MCF 10A (cell line): ENCODE measurements at regions of chr12 and their contacts with region 1.

Region 1: GRCh38 chr12:50111693-50112455 is at the start of gene COX14:
- DNase-seq: peak; percentile 99
- H3K4me3 Mint-ChIP-seq: peak within 1 kb of the TSS; percentile 99
- H3K27ac Mint-ChIP-seq: peak within 1 kb of the TSS; percentile 93
- H3K4me1 Mint-ChIP-seq: peaks cover 12% of the 10 kb centered on the region
- H3K27me3 Mint-ChIP-seq: no peaks in the 10 kb centered on the region
- CTCF ChIP-seq: peak; percentile 80
- total RNA-seq, gene COX14: 43.6 and 45.2 TPM in 2 replicates

Region 2: GRCh38 chr12:50084775-50085614 is 26.9 kb before region 1 on chr12 and contains the start of gene SMARCD1:
- CTCF ChIA-PET with region 1: interaction called, 232 read pairs
- POLR2A ChIA-PET with region 1: interaction called, 70 read pairs
- intact Hi-C with region 1: no loop called
- DNase-seq: peak; percentile 90
- H3K4me3 Mint-ChIP-seq: peak within 1 kb of the TSS; percentile 87
- H3K27ac Mint-ChIP-seq: peak within 1 kb of the TSS; percentile 90
- H3K4me1 Mint-ChIP-seq: peaks cover 33% of the 10 kb centered on the region
- H3K27me3 Mint-ChIP-seq: no peaks in the 10 kb centered on the region
- CTCF ChIP-seq: no peak
- total RNA-seq, gene SMARCD1: 57.4 and 58.7 TPM in 2 replicates

Region 3: DNA sequence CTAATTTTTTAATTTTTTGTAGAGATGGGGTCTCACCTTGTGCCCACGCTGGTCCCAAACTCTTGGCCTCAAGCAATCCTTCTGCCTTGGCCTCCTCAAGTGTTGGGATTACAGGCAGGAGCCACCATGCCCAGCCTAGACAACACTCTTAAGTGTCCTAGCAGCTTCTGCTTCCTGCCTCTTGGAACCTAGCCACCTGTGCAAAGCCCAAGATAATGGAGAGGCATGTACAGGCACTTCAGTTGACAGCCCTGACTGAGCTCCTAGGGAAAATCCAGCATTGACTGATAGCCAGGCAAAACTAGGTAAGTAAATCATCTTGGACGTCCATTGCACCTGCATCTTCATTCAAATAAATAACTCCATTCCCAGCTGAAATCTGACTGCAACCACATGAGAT is 15.7 kb after region 1 on chr12:
- CTCF ChIA-PET with region 1: interaction called, 48 read pairs
- POLR2A ChIA-PET with region 1: interaction called, 24 read pairs
- intact Hi-C with region 1: no loop called
- DNase-seq: no peak
- H3K4me3 Mint-ChIP-seq: no peak overlapping the region
- H3K27ac Mint-ChIP-seq: no peak overlapping the region
- H3K4me1 Mint-ChIP-seq: peaks cover under 1% of the 10 kb centered on the region
- H3K27me3 Mint-ChIP-seq: no peaks in the 10 kb centered on the region
- CTCF ChIP-seq: no peak

Region 4: DNA sequence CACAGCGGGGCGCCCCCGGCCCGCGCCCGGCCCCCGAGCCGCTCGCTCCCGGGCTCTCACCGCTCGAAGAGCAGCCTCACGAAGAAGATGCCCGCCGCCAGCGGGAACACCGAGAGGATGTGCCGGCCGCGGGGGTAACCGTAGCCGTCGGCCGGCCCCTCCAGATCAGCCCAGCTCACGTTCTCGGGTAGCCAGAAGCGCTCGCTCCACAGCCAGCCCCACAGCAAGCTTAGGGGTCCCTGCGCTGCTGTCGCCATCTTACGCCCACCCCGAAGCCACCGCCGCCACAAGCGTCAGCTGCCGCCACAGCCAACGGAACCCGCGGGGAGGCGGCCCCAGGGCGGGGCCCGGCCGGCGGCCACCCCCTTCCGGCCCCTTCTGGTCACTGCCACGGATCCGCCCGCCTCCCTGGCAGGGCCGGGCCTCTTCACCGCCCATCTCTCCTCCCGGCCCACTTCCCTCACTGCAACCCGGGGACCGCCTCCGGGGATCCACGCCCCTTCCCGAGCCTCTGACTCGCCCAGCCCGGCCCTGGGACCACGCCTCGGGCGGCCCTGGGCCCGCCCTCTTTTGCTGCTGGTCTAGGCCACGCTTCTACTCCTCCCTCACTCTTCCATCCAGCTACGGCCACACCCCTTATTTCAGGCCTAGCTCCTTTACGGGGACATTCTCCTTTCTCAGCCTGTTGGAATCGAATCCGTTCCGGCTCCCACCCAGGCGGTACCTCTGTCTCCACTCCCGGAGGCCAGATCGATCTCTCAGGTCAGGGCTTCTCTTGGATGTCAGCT is 55.4 kb after region 1 on chr12 and contains the start of gene CERS5:
- CTCF ChIA-PET with region 1: interaction called, 11 read pairs
- POLR2A ChIA-PET with region 1: interaction called, 56 read pairs
- intact Hi-C with region 1: loop called (anchors 2 kb)
- DNase-seq: peak; percentile 99
- H3K4me3 Mint-ChIP-seq: peak within 1 kb of the TSS; percentile 79
- H3K27ac Mint-ChIP-seq: peak within 1 kb of the TSS; percentile 79
- H3K4me1 Mint-ChIP-seq: peaks cover 12% of the 10 kb centered on the region
- H3K27me3 Mint-ChIP-seq: no peaks in the 10 kb centered on the region
- CTCF ChIP-seq: peak; percentile 9
- total RNA-seq, gene CERS5: 56.8 and 58.1 TPM in 2 replicates

Region 5: DNA sequence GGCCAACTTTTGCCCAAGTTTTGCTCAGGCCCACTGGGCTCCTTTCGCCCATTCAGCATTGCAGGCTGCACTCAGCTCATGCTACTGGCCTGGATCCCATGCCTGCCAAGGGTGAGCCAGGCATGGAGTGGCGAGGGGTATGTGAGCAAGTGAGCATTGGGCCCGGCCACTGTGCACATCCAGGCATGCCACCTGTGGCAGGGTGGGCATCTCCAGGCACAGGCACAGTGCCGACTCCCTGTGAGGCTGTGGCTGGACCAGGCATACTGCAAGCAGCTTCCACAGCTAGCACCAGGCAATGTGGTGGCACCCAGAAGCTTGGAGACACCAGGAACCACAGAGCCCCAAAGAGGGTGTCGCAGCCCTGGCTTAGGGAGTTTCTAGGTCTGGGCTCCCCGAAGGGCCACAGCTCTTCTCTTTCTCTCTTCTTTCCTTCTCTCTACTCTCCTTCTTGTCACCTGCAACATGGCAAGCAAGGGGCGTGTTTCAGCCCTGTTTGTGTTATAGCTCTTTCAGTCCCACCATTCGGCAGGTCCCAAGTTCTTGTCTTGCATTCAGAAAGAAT is 269.0 kb after region 1 on chr12:
- CTCF ChIA-PET with region 1: no interaction called
- POLR2A ChIA-PET with region 1: no interaction called
- intact Hi-C with region 1: no loop called
- DNase-seq: no peak
- H3K4me3 Mint-ChIP-seq: no peak overlapping the region
- H3K27ac Mint-ChIP-seq: no peak overlapping the region
- H3K4me1 Mint-ChIP-seq: no peaks in the 10 kb centered on the region
- H3K27me3 Mint-ChIP-seq: no peaks in the 10 kb centered on the region
- CTCF ChIP-seq: no peak